Activated naive CD4-positive, alpha-beta T cell treated with anti-CD3 and anti-CD28 coated beads for 36 hours (primary cell): ENCODE measurements at regions of chr2 and their contacts with region 1.

Region 1: GRCh38 chr2:156615836-156616322 is 179.7 kb downstream of the GPD2 start:
- DNase-seq: no peak
- H3K4me3 Mint-ChIP-seq: no peak overlapping the region
- H3K27ac Mint-ChIP-seq: no peak overlapping the region
- H3K4me1 Mint-ChIP-seq: no peaks in the 10 kb centered on the region
- H3K27me3 Mint-ChIP-seq: peaks cover 5% of the 10 kb centered on the region

Region 2: DNA sequence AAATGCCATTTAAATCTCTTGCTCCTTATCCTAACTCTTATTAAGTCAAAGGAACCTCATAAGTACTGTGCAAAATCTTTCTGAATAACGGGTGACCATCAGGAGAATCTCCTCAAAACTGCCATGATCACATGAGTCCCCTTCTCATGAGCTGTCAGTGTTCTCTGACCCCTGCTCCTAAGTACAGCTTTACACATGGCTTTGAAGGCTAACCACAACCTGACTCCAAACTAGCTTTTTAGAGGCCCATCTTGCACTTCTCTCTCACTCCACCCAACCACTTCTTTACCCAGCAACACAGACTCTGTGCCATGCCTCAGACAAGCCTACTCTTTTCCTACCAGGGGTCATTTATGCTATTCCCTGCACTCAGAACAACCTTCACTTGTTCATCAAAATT is 74.1 kb after region 1 on chr2:
- CTCF ChIA-PET with region 1: no interaction called
- intact Hi-C with region 1: loop called (anchors 1 kb)
- DNase-seq: no peak
- H3K4me3 Mint-ChIP-seq: no peak overlapping the region
- H3K27ac Mint-ChIP-seq: no peak overlapping the region
- H3K4me1 Mint-ChIP-seq: no peaks in the 10 kb centered on the region
- H3K27me3 Mint-ChIP-seq: peaks cover 3% of the 10 kb centered on the region